Caco-2 (cell line): ENCODE measurements at regions of chr3 and their contacts with region 1.

Region 1: DNA sequence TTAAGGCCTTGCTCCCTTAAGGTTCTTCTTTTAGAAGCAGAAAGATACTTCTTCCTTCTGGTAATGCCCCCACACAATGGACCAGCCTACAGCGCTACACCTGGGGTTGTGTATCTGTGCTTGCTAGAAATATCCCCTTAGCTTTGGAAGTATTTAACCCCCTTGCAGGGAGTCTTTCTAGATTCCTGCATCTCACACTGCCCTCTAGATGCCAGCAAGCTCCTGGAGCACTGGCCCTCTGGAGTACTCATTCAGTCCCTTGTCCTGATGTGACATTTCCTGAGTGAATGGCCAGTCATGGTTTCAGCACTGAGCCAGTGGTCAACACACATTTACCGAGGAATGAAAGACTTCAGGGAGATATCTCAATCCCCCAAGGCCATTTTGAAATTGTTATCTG is 30.4 kb upstream of the RBP2 start:
- DNase-seq: peak in 1 of 2 experiments; percentile 37
- H3K4me3 ChIP-seq: no peak overlapping the region
- H3K4me3 Mint-ChIP-seq: no peak overlapping the region
- H3K27ac Mint-ChIP-seq: no peak overlapping the region
- H3K4me1 ChIP-seq: peaks cover 16% of the 10 kb centered on the region; the same call in 1 of the 2 replicates
- H3K4me1 Mint-ChIP-seq: peaks cover 21% of the 10 kb centered on the region
- H3K27me3 ChIP-seq: no peaks in the 10 kb centered on the region
- H3K27me3 Mint-ChIP-seq: no peaks in the 10 kb centered on the region
- CTCF ChIP-seq: peak in 1 of 2 experiments; percentile 47

Region 2: DNA sequence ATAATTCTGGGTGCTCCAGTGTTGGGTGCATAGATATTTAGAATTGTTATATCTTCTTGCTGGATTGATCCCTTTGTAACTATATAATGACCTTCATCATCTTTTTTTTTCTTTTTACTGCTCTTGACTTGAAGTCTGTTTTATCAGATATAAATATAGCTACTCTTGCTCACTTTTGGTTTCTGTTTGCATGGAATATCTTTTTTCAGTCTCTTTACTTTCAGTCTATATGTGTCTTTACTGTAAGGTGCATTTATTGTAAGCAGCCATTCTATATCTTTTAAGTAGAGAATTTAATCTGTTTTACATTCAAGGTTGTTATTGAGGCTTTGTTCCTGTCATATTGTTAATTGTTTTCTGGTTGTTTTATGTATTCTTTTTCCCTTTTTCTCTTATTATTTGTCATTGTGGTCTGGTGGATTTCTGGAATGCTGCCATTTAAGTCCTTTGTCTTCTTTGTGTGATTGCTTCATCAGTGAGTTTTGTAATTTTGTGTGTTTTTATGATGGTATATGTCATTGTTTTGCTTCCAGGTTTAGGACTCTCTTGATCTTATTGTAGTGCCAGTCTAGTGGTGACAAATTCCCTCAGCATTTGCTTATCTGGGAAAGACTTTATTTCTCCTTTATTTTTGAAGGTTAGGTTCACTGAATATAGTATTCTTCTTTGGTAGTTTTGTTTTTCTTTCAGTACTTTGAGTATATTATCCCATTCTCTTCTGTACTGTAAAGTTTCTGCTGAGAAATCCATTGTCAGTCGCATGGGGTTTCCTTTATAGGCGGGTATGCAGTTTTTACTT is 453.8 kb before region 1 on chr3:
- CTCF ChIA-PET with region 1: no interaction called
- POLR2A ChIA-PET with region 1: no interaction called
- intact Hi-C with region 1: no loop called
- DNase-seq: no peak
- H3K4me3 ChIP-seq: no peak overlapping the region
- H3K4me3 Mint-ChIP-seq: no peak overlapping the region
- H3K27ac Mint-ChIP-seq: no peak overlapping the region
- H3K4me1 ChIP-seq: no peaks in the 10 kb centered on the region
- H3K4me1 Mint-ChIP-seq: no peaks in the 10 kb centered on the region
- H3K27me3 ChIP-seq: no peaks in the 10 kb centered on the region; the same call in 1 of the 2 replicates
- H3K27me3 Mint-ChIP-seq: peaks cover 13% of the 10 kb centered on the region
- CTCF ChIP-seq: no peak

Region 3: GRCh38 chr3:139288266-139288821 is 218.4 kb before region 1 on chr3:
- CTCF ChIA-PET with region 1: no interaction called
- POLR2A ChIA-PET with region 1: no interaction called
- intact Hi-C with region 1: no loop called
- DNase-seq: no peak
- H3K4me3 ChIP-seq: no peak overlapping the region
- H3K4me3 Mint-ChIP-seq: no peak overlapping the region
- H3K27ac Mint-ChIP-seq: no peak overlapping the region
- H3K4me1 ChIP-seq: no peaks in the 10 kb centered on the region
- H3K4me1 Mint-ChIP-seq: no peaks in the 10 kb centered on the region
- H3K27me3 ChIP-seq: no peaks in the 10 kb centered on the region
- H3K27me3 Mint-ChIP-seq: no peaks in the 10 kb centered on the region
- CTCF ChIP-seq: no peak

Region 4: GRCh38 chr3:139427283-139427993 is 79.3 kb before region 1 on chr3:
- CTCF ChIA-PET with region 1: interaction called, 3 read pairs
- POLR2A ChIA-PET with region 1: interaction called, 4 read pairs
- intact Hi-C with region 1: loop called (anchors 5 kb)
- DNase-seq: peak in 1 of 2 experiments; percentile 71
- H3K4me3 ChIP-seq: no peak overlapping the region
- H3K4me3 Mint-ChIP-seq: no peak overlapping the region
- H3K27ac Mint-ChIP-seq: no peak overlapping the region
- H3K4me1 ChIP-seq: no peaks in the 10 kb centered on the region
- H3K4me1 Mint-ChIP-seq: no peaks in the 10 kb centered on the region
- H3K27me3 ChIP-seq: no peaks in the 10 kb centered on the region
- H3K27me3 Mint-ChIP-seq: no peaks in the 10 kb centered on the region
- CTCF ChIP-seq: peak; percentile 68 to 76

Region 5: GRCh38 chr3:139455855-139456254 is 50.9 kb before region 1 on chr3:
- CTCF ChIA-PET with region 1: no interaction called
- POLR2A ChIA-PET with region 1: no interaction called
- intact Hi-C with region 1: loop called (anchors 5 kb)
- DNase-seq: no peak
- H3K4me3 ChIP-seq: no peak overlapping the region
- H3K4me3 Mint-ChIP-seq: no peak overlapping the region
- H3K27ac Mint-ChIP-seq: no peak overlapping the region
- H3K4me1 ChIP-seq: no peaks in the 10 kb centered on the region
- H3K4me1 Mint-ChIP-seq: no peaks in the 10 kb centered on the region
- H3K27me3 ChIP-seq: no peaks in the 10 kb centered on the region
- H3K27me3 Mint-ChIP-seq: no peaks in the 10 kb centered on the region
- CTCF ChIP-seq: no peak

Region 6: DNA sequence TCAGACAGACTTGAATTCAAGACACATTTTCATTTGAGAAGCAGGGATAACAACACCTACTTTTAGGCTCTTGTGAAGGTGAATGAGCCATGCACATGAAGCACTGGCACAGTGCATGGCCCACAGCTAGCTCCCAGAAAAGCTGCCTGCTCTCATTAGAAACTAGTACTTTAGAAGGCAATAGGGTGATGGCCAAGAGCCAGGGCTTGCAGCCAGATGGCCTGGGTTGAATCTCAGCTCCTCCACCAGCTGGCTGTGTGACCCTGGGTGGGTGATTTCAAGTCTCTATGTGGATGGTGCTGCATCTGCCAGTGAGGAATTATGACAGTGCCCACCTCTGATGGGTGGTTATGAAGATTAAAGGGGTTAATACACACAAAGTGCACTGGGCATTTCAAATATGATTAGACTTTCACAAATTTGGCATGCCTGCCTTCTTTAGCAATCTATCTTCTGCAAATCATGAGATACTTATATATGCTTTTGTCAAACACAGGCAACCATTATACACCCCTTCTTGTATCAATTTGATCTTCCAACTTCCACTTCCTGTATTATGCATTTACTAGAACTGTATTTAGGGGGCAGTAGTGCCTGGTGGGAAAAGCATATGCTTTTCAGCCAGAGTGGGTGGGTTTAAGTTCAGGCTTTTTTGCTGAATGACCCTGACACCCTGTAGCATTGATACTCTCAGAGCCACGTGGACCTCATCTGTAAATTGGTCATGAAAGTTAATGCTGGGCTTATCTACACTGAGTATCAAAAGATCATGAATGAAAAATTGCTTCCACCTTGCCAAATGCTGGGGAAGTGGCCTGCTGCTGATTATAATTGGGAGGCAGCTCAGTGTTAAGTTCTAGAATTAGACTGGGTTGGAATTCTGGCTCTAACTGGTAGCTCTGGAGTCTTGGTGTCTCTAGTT is 67.5 kb after region 1 on chr3:
- CTCF ChIA-PET with region 1: no interaction called
- POLR2A ChIA-PET with region 1: no interaction called
- intact Hi-C with region 1: no loop called
- DNase-seq: no peak
- H3K4me3 ChIP-seq: no peak overlapping the region
- H3K4me3 Mint-ChIP-seq: no peak overlapping the region
- H3K27ac Mint-ChIP-seq: no peak overlapping the region
- H3K4me1 ChIP-seq: no peaks in the 10 kb centered on the region
- H3K4me1 Mint-ChIP-seq: no peaks in the 10 kb centered on the region
- H3K27me3 ChIP-seq: no peaks in the 10 kb centered on the region
- H3K27me3 Mint-ChIP-seq: no peaks in the 10 kb centered on the region
- CTCF ChIP-seq: no peak